G401 (cell line): ENCODE measurements at regions of chr2 and their contacts with region 1.

Region 1: DNA sequence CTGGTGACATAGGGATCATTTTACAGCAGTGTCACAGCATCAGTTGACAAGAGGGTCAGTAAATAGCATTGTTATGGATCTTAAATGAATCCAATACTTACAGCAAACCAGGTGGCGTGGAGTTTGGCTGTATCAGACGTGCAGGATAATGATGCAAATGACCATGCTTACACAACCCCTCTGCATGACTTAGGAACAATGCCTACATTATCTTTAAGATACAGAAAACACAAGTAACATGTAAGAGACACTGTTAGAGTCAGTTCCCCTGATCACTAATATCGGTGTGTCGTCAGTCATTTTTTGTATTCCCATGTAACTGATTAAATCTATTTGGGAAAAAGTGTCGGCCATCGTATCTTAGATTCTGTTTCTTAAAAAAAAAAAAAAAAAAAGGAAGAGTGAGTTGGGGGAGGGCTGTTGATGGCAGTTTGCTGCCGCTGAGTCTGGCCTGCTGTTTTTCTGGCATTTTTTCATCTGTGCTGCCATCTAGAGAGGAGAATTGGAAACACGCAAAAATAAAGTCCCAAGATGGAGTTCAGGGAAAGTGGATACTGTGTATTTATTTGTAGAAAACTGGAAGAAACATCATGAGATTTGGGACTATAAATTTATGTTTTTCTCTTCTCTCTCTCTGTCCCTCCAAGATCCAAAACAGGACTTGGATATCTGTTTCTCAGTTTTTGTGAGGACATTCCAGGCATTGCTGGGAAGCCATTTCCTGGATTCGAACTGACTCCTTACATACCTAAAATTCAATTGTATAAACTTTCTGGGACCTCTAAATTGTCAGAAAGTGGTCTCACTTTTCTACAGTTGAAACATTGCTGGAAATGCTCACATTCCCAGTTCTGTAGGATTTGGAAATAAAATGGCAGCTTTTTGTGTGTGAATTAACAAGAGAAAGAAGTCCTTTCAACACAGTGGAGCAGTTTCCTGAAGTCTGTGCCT is 60.3 kb upstream of the AGPS start:
- DNase-seq: peak; percentile 81

Region 2: DNA sequence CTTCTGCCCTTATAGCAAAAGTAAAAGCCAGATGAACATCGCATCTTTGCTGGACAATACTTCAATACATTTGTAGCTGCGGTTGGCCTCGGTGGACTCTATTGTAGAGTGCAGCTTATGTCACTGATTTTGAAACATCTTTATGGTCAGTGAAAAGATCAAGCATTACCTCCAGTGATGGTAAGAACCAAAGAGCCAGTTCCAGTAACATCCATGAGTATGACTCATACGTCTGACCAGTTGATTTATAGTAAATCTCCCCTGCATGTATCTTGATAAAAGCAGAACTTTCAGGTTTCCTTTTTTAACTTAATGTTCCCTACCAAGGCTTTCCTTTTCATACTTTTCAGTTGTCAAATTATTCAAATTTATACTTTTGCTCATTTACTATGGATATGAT is 238.9 kb before region 1 on chr2:
- in situ Hi-C with region 1: no loop called
- DNase-seq: no peak

Region 3: DNA sequence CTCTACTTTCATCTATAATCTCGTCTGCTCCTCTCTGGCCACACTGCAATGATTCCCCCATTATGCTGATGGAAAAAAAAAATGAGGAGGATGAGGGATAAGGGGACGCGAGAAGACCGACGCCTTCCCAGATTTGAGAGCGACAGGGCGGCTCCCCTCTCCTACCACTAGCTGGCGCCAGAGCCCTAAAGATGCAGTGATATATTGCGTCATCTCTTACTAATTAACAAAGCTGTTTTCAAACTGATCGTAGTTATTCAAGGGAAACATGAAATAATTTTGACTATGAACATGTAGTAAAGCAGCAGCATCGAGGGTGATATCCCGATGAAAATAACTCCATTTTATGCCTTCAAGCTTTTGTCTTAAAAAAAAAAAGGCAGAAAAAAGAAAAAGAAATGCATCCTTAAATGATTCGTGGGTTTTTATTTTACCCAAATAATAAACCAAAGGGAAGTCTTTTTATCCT is 167.7 kb before region 1 on chr2:
- in situ Hi-C with region 1: loop called (anchors 10 kb)
- DNase-seq: peak; percentile 97

Region 4: DNA sequence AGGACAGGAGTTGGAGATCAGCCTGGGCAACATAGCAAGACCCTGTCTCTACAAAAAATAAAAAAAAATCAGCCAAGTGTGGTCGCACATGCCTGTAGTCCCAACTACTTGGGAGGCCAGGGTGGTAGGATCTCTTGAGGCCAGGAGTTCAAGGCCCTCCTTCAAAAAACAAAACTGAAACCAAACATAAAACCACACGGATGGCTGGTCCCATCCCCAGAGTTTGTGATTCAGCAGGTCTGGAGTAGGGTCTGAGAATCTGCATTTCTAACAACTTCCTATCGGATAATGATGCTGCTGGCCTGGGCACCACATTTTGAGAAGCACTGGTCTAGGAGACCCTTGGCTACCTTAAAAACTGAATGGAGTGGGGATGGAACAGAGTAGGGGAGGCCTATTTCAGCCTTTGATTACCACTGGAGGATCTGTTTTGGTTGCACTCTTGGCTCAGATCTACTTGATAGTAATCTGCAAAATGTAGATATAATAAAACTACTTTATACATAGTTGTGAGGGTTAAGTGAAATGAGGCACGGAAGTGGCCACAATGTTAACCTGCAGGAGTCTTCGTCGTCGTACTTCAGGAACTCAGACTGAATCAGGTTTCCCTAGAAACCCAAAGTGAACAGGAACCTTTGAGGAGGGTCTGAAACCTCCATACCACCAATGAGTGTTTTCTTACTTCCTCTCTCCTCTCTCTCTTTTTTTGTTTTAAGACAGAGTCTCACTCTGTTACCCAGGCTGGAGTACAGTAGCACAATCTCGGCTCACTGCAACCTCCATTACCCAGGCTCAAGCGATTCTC is 42.3 kb before region 1 on chr2:
- in situ Hi-C with region 1: no loop called
- DNase-seq: no peak

Region 5: GRCh38 chr2:177516824-177517544 is 184.7 kb after region 1 on chr2:
- in situ Hi-C with region 1: no loop called
- DNase-seq: no peak

Region 6: DNA sequence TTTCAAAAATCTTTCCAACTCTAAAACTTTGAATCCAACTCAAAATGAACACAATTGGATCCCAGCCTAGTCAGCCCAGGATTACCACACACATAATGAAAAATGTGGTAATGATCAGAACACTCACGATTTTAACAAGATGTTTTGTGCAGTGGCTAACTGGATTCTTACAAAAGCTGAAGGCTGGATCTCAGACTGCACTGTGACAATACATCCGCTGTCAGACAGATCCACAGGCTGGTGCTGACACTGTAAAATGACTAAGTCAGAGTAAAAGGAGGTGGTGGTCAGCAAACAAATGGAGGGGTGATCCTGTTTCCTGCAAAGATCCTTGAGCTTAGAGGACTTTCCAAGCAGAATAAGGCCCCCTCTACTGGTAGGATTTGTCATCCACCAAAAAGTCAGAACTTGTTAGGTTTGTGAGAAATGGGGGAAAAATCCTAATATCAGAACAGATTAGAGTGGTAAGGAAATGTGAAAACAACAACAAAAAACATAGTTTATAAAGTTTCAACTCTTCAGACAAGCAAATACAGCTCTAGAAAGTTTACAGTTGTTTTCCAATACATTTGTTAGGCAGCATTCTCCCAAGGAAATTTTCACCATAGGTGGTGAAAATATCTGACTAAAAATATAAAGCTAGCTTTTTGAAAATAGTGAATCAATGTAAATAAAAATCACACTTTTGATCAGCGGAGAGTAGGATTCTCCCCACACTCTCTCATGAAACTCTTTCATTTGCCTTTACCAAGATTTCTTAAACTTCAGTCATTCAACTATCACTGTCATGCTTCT is 272.2 kb after region 1 on chr2:
- in situ Hi-C with region 1: loop called (anchors 10 kb)
- DNase-seq: peak; percentile 65